OCI-LY7 (cell line): ENCODE measurements at regions of chr1 and their contacts with region 1.

Region 1: DNA sequence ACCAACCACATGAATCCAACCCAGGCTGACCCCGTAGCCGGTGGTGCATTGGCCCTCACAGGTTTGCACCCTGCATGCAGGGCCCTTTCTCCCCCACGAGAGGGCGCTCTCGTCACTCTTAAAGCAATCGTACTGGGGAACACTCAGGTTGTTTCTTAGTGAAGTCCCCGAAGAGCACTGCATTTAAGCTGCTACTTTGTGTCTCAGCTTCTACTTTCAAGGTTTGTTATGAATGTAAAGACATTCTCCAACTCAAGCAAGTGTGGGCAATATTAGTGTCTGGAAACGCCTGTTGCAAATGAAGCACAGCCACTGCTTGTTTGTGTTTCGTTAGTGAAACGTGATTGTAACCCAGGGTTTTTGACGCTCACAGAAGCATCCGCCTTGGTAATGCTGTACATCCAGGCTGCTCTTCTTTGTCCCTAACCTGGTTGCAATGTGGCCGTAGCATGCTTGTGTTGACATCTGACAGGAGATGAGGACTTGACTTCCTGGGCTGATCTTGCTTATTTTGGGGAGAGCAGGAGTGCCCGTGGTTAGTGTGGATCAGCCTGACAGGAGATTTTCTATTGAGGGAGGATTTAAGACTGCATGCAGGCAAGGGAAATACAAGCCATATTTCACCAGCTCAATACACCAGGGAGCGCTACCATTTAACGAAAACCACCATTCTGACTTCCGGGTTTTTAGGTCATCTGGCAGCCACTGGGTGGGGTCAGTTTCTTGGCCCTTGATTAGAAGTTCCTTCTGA is 79.8 kb downstream of the ST6GALNAC3 start:
- DNase-seq: peak; percentile 88
- H3K4me3 ChIP-seq: peak overlapping the region; percentile 52
- H3K27ac ChIP-seq: peak overlapping the region; percentile 18
- H3K4me1 ChIP-seq: peaks cover 6% of the 10 kb centered on the region
- CTCF ChIP-seq: peak; percentile 89

Region 2: DNA sequence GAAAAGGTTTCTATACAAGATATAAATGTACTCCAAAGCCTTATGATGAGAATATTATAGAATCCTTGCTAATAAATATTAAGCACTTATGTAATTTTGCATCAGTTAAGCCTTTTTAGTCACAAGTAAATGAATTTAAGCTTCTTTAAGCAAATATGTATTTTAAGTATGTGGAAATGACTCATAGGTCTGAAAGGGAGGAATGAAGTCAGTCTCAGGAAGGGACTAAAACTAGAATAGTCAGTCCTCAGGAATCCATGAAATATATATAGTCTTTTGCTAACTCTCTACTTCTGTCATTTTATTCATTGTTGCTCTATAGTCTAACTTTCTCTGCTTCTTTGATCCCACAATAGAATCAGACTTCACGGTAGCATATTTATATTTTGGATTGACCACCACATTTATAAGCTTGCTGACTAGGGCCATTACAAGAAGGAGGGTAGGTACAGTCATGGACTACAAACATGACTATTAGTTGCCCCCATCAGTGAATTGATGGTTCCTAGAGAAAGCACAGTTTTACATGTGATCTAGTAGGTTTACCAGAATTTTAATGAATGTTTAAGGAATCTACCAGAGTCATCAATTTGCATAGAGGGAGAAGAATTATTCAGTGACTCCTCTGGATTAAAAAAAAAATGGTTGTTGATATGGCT is 388.6 kb before region 1 on chr1:
- CTCF ChIA-PET with region 1: no interaction called
- POLR2A ChIA-PET with region 1: no interaction called
- intact Hi-C with region 1: no loop called
- DNase-seq: no peak
- H3K4me3 ChIP-seq: no peak overlapping the region
- H3K27ac ChIP-seq: no peak overlapping the region
- H3K4me1 ChIP-seq: no peaks in the 10 kb centered on the region
- CTCF ChIP-seq: no peak

Region 3: DNA sequence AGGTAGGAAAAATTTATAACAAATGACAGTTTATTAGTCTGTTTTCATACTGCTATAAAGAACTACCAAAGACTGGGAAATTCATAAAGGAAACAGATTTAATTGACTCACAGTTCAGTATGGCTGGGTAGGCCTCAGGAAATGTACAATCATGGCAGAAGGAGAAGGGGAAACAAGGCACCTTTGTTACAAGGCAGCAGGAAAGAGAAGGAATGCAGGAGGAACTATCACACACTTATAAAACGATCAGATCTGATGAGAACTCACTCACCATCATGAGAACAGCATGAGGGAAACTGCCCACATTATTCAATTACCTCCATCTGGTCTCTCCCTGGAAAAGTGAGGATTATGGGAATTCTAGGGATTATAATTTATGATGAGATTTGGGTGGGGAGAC is 283.4 kb before region 1 on chr1:
- CTCF ChIA-PET with region 1: no interaction called
- POLR2A ChIA-PET with region 1: no interaction called
- intact Hi-C with region 1: no loop called
- DNase-seq: no peak
- H3K4me3 ChIP-seq: no peak overlapping the region
- H3K27ac ChIP-seq: no peak overlapping the region
- H3K4me1 ChIP-seq: no peaks in the 10 kb centered on the region
- CTCF ChIP-seq: no peak

Region 4: DNA sequence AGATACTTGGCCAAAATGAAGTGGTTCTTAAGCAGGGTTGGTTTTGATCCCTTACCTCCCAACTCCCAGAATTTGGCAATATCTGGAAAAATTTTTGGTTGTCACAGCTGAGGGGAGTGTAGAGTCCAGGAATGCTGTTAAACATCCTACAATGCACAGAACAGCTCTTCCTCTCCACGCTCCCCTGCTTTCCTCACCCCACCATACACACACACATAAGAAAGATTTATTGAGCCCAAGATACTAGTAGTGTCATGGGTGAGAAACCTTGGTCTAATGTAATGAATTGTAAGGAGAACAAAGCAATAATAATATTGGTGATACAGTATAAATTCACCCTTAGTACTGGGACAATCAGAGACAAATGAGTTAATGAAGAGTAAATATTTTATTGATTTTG is 269.9 kb before region 1 on chr1:
- CTCF ChIA-PET with region 1: no interaction called
- POLR2A ChIA-PET with region 1: no interaction called
- intact Hi-C with region 1: no loop called
- DNase-seq: no peak
- H3K4me3 ChIP-seq: no peak overlapping the region
- H3K27ac ChIP-seq: no peak overlapping the region
- H3K4me1 ChIP-seq: no peaks in the 10 kb centered on the region
- CTCF ChIP-seq: no peak

Region 5: GRCh38 chr1:76294482-76295194 is 140.3 kb after region 1 on chr1:
- CTCF ChIA-PET with region 1: no interaction called
- POLR2A ChIA-PET with region 1: interaction called, 4 read pairs
- intact Hi-C with region 1: loop called (anchors 2 kb)
- DNase-seq: peak; percentile 87
- H3K4me3 ChIP-seq: peak overlapping the region; percentile 62
- H3K27ac ChIP-seq: peak overlapping the region; percentile 95
- H3K4me1 ChIP-seq: peaks cover 86% of the 10 kb centered on the region
- CTCF ChIP-seq: no peak

Region 6: DNA sequence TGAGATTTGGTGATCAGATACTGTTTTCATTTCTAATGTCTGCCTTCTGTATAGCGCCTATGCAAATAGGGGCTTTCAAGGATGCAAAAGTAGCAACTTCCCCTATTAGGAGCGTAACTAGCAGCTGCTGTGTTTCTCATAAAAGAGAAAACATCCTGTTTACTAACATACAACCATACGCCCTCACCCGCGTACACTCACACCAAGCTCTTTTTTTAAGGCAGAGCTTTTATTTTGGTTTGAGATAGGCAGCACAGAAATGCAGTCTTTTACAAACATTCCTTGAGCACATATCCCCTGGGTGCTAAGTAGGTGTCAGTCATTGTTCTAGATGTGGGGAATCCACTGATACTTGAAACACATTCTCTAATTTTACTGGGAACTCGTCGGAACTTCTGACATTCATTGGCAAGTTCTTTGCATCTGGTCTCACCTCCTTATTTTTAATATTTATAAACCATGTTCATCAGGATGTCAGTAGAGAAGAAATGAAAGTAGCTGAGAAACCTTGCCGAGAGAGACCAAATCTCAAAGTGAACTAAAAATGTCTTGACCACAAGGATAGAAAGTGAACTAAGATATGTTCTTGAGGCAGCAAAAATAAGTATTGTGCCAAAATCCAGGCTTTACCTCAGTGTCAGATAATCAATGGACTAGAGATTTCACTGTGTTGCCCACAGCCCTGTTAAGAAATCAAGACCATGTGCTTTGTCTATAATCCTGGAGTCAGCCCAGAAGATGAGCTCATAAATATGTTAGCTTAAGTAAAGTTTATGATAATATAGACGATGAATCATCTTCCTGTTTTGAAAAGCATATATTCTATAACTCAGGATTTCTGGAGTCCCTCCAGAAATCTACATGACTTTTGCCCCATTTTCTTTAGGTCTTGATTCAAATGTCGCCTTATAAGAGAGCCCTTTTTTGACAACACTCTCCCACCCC is 271.1 kb after region 1 on chr1:
- CTCF ChIA-PET with region 1: no interaction called
- POLR2A ChIA-PET with region 1: no interaction called
- intact Hi-C with region 1: loop called (anchors 10 kb)
- DNase-seq: peak; percentile 55
- H3K4me3 ChIP-seq: peak overlapping the region; percentile 55
- H3K27ac ChIP-seq: no peak overlapping the region
- H3K4me1 ChIP-seq: peaks cover 15% of the 10 kb centered on the region
- CTCF ChIP-seq: no peak

Region 7: DNA sequence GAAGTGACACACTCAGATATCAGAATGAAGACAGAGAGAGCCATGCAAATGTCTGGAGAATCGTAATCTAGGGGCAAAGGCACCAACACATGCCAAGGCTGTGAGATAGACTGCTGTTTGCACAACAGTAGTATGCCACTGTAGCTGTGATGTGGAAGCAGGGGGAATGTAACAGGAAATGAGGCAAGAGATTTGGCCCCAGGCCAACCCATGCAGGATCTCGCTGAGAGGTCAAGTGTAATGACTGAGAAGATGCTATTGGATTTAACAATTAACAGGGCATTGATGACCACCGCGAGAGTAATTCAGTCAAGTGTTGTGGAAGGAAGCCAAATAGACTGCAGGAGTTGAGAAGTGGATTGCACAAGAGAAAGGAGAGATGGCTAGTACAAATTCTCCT is 605.6 kb after region 1 on chr1:
- CTCF ChIA-PET with region 1: no interaction called
- POLR2A ChIA-PET with region 1: no interaction called
- intact Hi-C with region 1: loop called (anchors 10 kb)
- DNase-seq: no peak
- H3K4me3 ChIP-seq: no peak overlapping the region
- H3K27ac ChIP-seq: no peak overlapping the region
- H3K4me1 ChIP-seq: no peaks in the 10 kb centered on the region
- CTCF ChIP-seq: no peak

Region 8: DNA sequence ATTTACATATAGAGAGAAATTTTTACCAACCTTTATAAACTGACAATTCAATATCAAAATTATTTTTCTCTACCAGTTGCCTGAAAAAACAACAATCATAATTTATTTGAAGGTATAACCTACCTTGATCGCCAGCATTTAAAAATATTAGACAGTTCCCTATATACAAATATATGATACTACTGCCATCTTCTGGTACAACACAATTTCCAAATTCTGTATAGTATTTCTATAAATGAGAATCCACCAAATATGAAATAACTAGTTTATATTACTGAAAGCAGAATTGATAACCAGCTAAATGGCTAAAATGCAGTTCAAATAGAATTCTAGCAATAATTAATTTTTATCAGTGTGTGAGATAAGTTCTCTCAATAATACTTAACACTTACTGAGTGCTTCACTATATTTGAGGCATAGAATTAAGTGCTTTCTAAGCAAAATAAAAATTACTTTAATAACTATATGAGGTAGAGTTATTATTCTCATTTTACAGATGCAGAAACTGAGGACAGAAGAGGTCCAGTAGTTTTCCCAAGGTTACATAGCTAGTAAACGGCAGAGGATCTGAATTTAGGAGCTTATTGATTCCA is 989.2 kb after region 1 on chr1:
- CTCF ChIA-PET with region 1: no interaction called
- POLR2A ChIA-PET with region 1: no interaction called
- intact Hi-C with region 1: loop called (anchors 1 kb)
- DNase-seq: peak; percentile 25
- H3K4me3 ChIP-seq: no peak overlapping the region
- H3K27ac ChIP-seq: no peak overlapping the region
- H3K4me1 ChIP-seq: no peaks in the 10 kb centered on the region
- CTCF ChIP-seq: peak; percentile 80